ENCODE measurements at regions of chr2 and their contacts with region 1.

Region 1: GRCh38 chr2:61176755-61177726 is 15.1 kb downstream of the C2orf74 start:
- DNase-seq: peak; percentile 92
- H3K4me3 Mint-ChIP-seq: peak overlapping the region; percentile 90
- H3K27ac Mint-ChIP-seq: peak overlapping the region; percentile 87
- H3K4me1 Mint-ChIP-seq: peaks cover 48% of the 10 kb centered on the region
- H3K27me3 Mint-ChIP-seq: peaks cover 10% of the 10 kb centered on the region

Region 2: DNA sequence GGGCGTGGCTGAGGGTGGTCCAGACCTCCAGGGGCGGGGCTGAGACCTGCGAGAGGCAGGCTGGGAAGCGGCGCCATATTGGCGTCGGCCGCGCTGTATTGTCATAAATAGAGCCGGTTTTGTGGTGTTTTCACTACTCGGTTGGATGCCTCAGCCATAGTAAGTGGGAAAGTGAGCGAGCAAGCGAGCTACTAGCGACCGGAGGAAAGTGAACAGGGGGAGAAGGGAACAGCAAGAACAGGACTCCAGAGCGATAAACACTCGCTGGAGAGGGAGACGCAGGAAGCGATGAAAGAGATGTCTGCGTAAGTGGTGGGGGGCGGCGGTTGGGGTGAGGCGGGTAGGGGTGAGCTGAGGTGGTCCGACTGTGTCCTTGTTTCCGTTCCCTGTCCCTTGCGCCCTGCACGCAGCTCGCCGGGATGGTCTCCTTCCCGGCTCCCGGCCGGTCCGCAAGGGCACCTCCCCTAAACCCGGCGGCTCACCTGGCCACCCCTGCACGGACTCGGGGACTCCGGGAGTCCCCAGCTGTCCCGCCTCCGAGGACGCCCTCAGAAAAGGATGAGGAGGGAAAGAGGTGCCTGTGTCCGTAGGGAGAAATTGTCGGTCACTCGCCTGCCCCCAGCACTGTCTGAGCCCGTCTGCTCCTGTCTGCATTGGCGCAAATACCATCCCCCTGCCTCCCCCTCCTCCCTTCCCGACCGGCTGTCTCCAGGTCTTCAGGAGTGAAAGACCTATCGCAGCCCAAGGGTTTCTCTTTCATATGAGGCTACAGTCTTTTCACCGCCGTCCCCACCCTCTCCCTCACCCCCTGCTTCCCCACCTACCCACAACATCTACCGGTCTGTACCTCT is 420.6 kb before region 1 on chr2 and contains the start of gene PAPOLG:
- intact Hi-C with region 1: loop called (anchors 1 kb)
- DNase-seq: peak; percentile 94
- H3K4me3 Mint-ChIP-seq: peak within 1 kb of the TSS; percentile 99
- H3K27ac Mint-ChIP-seq: peak within 1 kb of the TSS; percentile 99
- H3K4me1 Mint-ChIP-seq: peaks cover 31% of the 10 kb centered on the region
- H3K27me3 Mint-ChIP-seq: no peaks in the 10 kb centered on the region
- total RNA-seq, gene PAPOLG: 17.2 and 22.2 TPM in 2 replicates

Region 3: DNA sequence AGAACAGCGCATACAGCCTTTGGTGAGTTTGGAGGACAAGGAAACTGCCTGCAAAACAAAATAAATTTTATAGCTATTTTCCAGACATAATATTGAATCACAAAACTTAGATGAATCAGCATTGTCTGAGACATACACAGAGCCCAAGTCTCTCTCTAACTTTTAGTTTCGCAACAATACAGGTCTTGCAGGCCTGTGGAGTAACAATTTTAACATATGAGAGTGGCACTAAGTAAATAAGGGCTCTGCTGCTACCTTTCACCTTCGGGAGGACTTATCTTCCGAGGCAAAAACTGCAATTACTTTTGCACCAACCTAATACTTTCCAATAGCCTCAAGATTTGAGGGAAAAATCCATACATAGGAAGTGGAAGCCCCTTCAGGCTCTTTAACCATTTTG is 215.5 kb before region 1 on chr2:
- intact Hi-C with region 1: no loop called
- DNase-seq: no peak
- H3K4me3 Mint-ChIP-seq: no peak overlapping the region
- H3K27ac Mint-ChIP-seq: no peak overlapping the region
- H3K4me1 Mint-ChIP-seq: peaks cover 27% of the 10 kb centered on the region
- H3K27me3 Mint-ChIP-seq: no peaks in the 10 kb centered on the region

Region 4: DNA sequence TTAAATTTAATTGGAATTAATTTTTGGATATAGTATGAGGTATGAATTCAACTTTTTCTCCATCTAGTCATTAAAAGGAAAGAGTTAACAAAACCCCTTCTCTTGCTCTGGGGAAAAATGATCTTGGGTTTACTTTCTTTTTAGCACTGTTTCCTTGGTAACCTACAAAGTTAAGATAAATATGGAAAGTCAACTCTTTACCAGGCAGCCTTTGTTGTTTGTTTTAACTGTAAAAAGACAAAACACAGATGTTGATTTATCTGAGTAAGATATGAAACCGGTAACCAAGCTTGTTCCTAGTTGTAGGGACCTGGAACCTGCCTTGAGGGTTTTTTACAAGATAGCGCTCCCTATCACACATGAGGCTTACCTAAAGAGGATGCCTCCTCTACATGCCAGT is 121.5 kb before region 1 on chr2:
- intact Hi-C with region 1: no loop called
- DNase-seq: no peak
- H3K4me3 Mint-ChIP-seq: no peak overlapping the region
- H3K27ac Mint-ChIP-seq: peak overlapping the region; percentile 53
- H3K4me1 Mint-ChIP-seq: no peaks in the 10 kb centered on the region
- H3K27me3 Mint-ChIP-seq: no peaks in the 10 kb centered on the region

Region 5: GRCh38 chr2:61065715-61066709 is 111.0 kb before region 1 on chr2 and contains the start of gene SANBR:
- intact Hi-C with region 1: loop called (anchors 1 kb)
- DNase-seq: peak; percentile 85
- H3K4me3 Mint-ChIP-seq: peak within 1 kb of the TSS; percentile 92
- H3K27ac Mint-ChIP-seq: peak within 1 kb of the TSS; percentile 87
- H3K4me1 Mint-ChIP-seq: peaks cover 16% of the 10 kb centered on the region
- H3K27me3 Mint-ChIP-seq: peaks cover 5% of the 10 kb centered on the region
- total RNA-seq, gene SANBR: 2.0 and 2.2 TPM in 2 replicates

Region 6: GRCh38 chr2:61470965-61471904 is 294.2 kb after region 1 on chr2 and contains the start of gene USP34:
- intact Hi-C with region 1: loop called (anchors 1 kb)
- DNase-seq: peak; percentile 88
- H3K4me3 Mint-ChIP-seq: peak within 1 kb of the TSS; percentile 95
- H3K27ac Mint-ChIP-seq: peak within 1 kb of the TSS; percentile 94
- H3K4me1 Mint-ChIP-seq: peaks cover 28% of the 10 kb centered on the region
- H3K27me3 Mint-ChIP-seq: no peaks in the 10 kb centered on the region
- total RNA-seq, gene USP34: 91.3 and 98.1 TPM in 2 replicates

Region 7: GRCh38 chr2:61888267-61889055 is 711.4 kb after region 1 on chr2 and contains the start of gene CCT4:
- intact Hi-C with region 1: loop called (anchors 1 kb)
- DNase-seq: peak; percentile 86
- H3K4me3 Mint-ChIP-seq: peak within 1 kb of the TSS; percentile 95
- H3K27ac Mint-ChIP-seq: peak within 1 kb of the TSS; percentile 97
- H3K4me1 Mint-ChIP-seq: peaks cover 23% of the 10 kb centered on the region
- H3K27me3 Mint-ChIP-seq: no peaks in the 10 kb centered on the region
- total RNA-seq, gene CCT4: 354 and 381 TPM in 2 replicates

Measured in activated T-helper 1 cell treated with anti-CD3 and anti-CD28 coated beads, Interleukin-12 subunit alpha, Interleukin-12 subunit beta, Interleukin-2, Interleukin-4 antibody, amounts not matched to agents 30 ng/mL and 10 ng/mL and 1 ng/mL, durations not matched to agents 14 hours and 24 hours and 36 hours (primary cell).